ENCODE measurements at regions of chr4 and their contacts with region 1.

Region 1: GRCh38 chr4:38069271-38069760 is 109.1 kb downstream of the PTTG2 start:
- DNase-seq: peak; percentile 50 to 56
- H3K4me3 ChIP-seq: no peak overlapping the region
- H3K4me3 Mint-ChIP-seq: no peak overlapping the region
- H3K27ac Mint-ChIP-seq: peak overlapping the region; percentile 23
- H3K4me1 ChIP-seq: peaks cover 5% of the 10 kb centered on the region
- H3K4me1 Mint-ChIP-seq: no peaks in the 10 kb centered on the region
- H3K27me3 ChIP-seq: no peaks in the 10 kb centered on the region
- H3K27me3 Mint-ChIP-seq: no peaks in the 10 kb centered on the region
- CTCF ChIP-seq: peak; percentile 37 to 72

Region 2: GRCh38 chr4:36771411-36772153 is 1297.7 kb before region 1 on chr4:
- CTCF ChIA-PET with region 1: no interaction called
- POLR2A ChIA-PET with region 1: no interaction called
- intact Hi-C with region 1: no loop called
- DNase-seq: no peak
- H3K4me3 ChIP-seq: no peak overlapping the region
- H3K4me3 Mint-ChIP-seq: no peak overlapping the region
- H3K27ac Mint-ChIP-seq: no peak overlapping the region
- H3K4me1 ChIP-seq: no peaks in the 10 kb centered on the region
- H3K4me1 Mint-ChIP-seq: no peaks in the 10 kb centered on the region
- H3K27me3 ChIP-seq: no peaks in the 10 kb centered on the region
- H3K27me3 Mint-ChIP-seq: peaks cover 2% of the 10 kb centered on the region
- CTCF ChIP-seq: no peak

Region 3: GRCh38 chr4:38082424-38083385 is 13.4 kb after region 1 on chr4:
- CTCF ChIA-PET with region 1: interaction called, 4 read pairs
- POLR2A ChIA-PET with region 1: interaction called, 12 read pairs
- intact Hi-C with region 1: no loop called
- DNase-seq: no peak
- H3K4me3 ChIP-seq: no peak overlapping the region
- H3K4me3 Mint-ChIP-seq: no peak overlapping the region
- H3K27ac Mint-ChIP-seq: peak overlapping the region; percentile 14
- H3K4me1 ChIP-seq: peaks cover 9% of the 10 kb centered on the region
- H3K4me1 Mint-ChIP-seq: peaks cover 20% of the 10 kb centered on the region
- H3K27me3 ChIP-seq: no peaks in the 10 kb centered on the region
- H3K27me3 Mint-ChIP-seq: no peaks in the 10 kb centered on the region
- CTCF ChIP-seq: no peak

Region 4: DNA sequence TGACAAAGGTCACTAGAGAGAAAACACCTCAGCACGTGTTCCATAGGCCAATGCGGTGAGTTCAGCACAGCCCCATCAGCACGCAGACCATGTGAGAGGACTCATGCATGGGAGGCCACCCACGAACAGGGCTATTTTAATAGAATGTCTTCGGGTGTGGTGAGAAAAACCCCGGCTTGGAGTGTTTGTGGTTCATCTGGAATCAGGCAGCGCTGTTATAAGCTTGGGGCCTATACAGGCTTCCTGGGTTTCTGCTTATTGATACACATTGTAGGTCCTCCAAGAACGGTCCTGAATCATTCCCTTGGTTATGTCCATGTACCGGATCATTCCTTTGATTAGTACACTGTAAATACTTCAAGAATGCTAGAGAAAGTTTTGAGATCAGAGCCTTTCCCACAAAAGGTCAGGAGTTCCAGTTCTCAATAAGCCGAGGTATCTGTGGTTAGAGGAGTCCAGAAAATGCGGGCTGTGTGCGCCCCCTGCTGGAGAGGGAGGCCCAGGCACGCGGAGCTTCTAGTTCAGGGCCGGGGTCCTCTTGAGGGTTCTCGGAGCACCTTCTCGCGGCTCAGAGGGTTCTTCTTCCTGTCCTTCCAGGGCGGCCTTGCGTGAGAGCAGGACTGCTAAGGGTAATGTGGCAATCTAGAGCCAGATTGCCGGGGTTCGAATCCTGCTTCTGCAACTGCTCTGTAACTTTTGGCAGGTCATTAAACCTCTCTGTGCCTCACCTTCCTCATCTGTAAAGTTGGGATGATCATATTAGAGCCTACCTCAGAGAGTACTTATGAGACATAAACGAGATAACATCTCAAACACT is 661.7 kb after region 1 on chr4:
- CTCF ChIA-PET with region 1: interaction called, 4 read pairs
- POLR2A ChIA-PET with region 1: no interaction called
- intact Hi-C with region 1: loop called (anchors 5 kb)
- DNase-seq: peak; percentile 67 to 80
- H3K4me3 ChIP-seq: no peak overlapping the region
- H3K4me3 Mint-ChIP-seq: no peak overlapping the region
- H3K27ac Mint-ChIP-seq: no peak overlapping the region
- H3K4me1 ChIP-seq: no peaks in the 10 kb centered on the region
- H3K4me1 Mint-ChIP-seq: no peaks in the 10 kb centered on the region
- H3K27me3 ChIP-seq: no peaks in the 10 kb centered on the region
- H3K27me3 Mint-ChIP-seq: no peaks in the 10 kb centered on the region
- CTCF ChIP-seq: peak; percentile 75 to 88